ENCODE measurements at regions of chr5 and their contacts with region 1.

Region 1: GRCh38 chr5:90264689-90265544 is 144.6 kb downstream of the CETN3 start:
- DNase-seq: peak; percentile 82
- ATAC-seq: peak; percentile 84
- H3K4me3 ChIP-seq: no peak overlapping the region
- H3K27ac ChIP-seq: no peak overlapping the region
- H3K4me1 ChIP-seq: no peaks in the 10 kb centered on the region
- H3K27me3 ChIP-seq: no peaks in the 10 kb centered on the region
- CTCF ChIP-seq: peak; percentile 99

Region 2: GRCh38 chr5:89556215-89557009 is 708.5 kb before region 1 on chr5:
- CTCF ChIA-PET with region 1: no interaction called
- POLR2A ChIA-PET with region 1: no interaction called
- intact Hi-C with region 1: loop called (anchors 10 kb)
- DNase-seq: peak; percentile 96
- ATAC-seq: peak; percentile 98
- H3K4me3 ChIP-seq: peak overlapping the region; percentile 6; the same call in 1 of the 2 replicates
- H3K27ac ChIP-seq: peak overlapping the region; percentile 86
- H3K4me1 ChIP-seq: peaks cover 20% of the 10 kb centered on the region
- H3K27me3 ChIP-seq: no peaks in the 10 kb centered on the region
- CTCF ChIP-seq: no peak

Region 3: GRCh38 chr5:89721353-89721752 is 543.6 kb before region 1 on chr5:
- CTCF ChIA-PET with region 1: no interaction called
- POLR2A ChIA-PET with region 1: no interaction called
- intact Hi-C with region 1: no loop called
- DNase-seq: no peak
- ATAC-seq: no peak
- H3K4me3 ChIP-seq: no peak overlapping the region
- H3K27ac ChIP-seq: no peak overlapping the region
- H3K4me1 ChIP-seq: peaks cover 9% of the 10 kb centered on the region
- H3K27me3 ChIP-seq: no peaks in the 10 kb centered on the region
- CTCF ChIP-seq: no peak

Region 4: GRCh38 chr5:89756955-89757354 is 508.0 kb before region 1 on chr5:
- CTCF ChIA-PET with region 1: no interaction called
- POLR2A ChIA-PET with region 1: interaction called, 10 read pairs
- intact Hi-C with region 1: no loop called
- DNase-seq: no peak
- ATAC-seq: no peak
- H3K4me3 ChIP-seq: no peak overlapping the region
- H3K27ac ChIP-seq: no peak overlapping the region
- H3K4me1 ChIP-seq: peaks cover 14% of the 10 kb centered on the region
- H3K27me3 ChIP-seq: no peaks in the 10 kb centered on the region
- CTCF ChIP-seq: no peak

Region 5: GRCh38 chr5:90111364-90112032 is 153.4 kb before region 1 on chr5:
- CTCF ChIA-PET with region 1: no interaction called
- POLR2A ChIA-PET with region 1: no interaction called
- intact Hi-C with region 1: loop called (anchors 10 kb)
- DNase-seq: no peak
- ATAC-seq: no peak
- H3K4me3 ChIP-seq: no peak overlapping the region
- H3K27ac ChIP-seq: no peak overlapping the region
- H3K4me1 ChIP-seq: no peaks in the 10 kb centered on the region
- H3K27me3 ChIP-seq: no peaks in the 10 kb centered on the region
- CTCF ChIP-seq: no peak

Region 6: GRCh38 chr5:90221942-90222341 is 43.0 kb before region 1 on chr5:
- CTCF ChIA-PET with region 1: no interaction called
- POLR2A ChIA-PET with region 1: no interaction called
- intact Hi-C with region 1: loop called (anchors 1 kb)
- DNase-seq: peak; percentile 96
- ATAC-seq: peak; percentile 99
- H3K4me3 ChIP-seq: no peak overlapping the region
- H3K27ac ChIP-seq: peak overlapping the region; percentile 70
- H3K4me1 ChIP-seq: peaks cover 27% of the 10 kb centered on the region
- H3K27me3 ChIP-seq: no peaks in the 10 kb centered on the region
- CTCF ChIP-seq: no peak

Region 7: GRCh38 chr5:90233476-90233875 is 31.4 kb before region 1 on chr5:
- CTCF ChIA-PET with region 1: no interaction called
- POLR2A ChIA-PET with region 1: no interaction called
- intact Hi-C with region 1: no loop called
- DNase-seq: no peak
- ATAC-seq: no peak
- H3K4me3 ChIP-seq: no peak overlapping the region
- H3K27ac ChIP-seq: no peak overlapping the region
- H3K4me1 ChIP-seq: peaks cover 15% of the 10 kb centered on the region
- H3K27me3 ChIP-seq: no peaks in the 10 kb centered on the region
- CTCF ChIP-seq: no peak

Region 8: DNA sequence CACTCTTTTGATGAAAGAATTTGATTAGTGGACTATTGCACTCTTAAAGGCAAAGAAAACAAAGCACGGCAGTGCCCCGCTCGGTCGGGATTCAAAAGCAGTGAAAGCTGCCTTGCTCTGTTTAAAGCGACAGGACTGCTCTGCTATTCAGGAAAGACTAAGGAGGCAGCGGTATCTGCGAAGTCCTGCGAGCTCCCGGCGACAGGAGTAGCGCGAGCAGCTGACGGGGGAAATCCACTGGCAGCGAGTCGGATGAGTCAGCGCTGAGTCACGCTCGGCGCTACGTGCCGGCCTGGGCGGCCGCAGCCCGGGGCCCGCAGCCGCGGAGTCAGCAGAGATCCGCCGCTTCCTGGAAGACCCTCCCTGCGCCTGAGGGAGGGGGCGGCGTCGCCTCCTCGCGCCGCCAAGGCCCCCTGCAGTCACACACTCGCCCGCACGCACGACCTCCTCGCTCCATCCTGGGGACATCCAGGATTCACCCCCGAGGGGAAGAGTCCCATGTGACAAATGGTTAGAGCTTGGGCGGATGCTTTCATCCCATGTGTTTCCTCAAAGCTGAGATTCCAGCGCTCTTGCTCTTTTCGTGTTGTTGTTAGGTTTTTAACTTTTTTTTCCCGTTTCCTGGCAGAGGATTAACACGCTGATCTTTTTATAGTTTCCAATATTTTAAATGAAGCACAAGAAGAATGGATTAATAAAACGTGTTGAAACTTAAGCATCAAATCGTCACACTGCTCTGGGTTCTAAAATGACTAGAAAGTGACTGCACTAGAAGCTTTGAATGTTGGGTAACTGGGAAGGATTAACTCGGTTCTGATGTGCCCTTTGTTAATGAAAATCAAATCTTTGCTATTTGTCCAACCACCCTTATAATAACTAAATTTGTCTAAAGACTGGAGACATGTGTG is 1015.7 kb after region 1 on chr5:
- CTCF ChIA-PET with region 1: no interaction called
- POLR2A ChIA-PET with region 1: no interaction called
- intact Hi-C with region 1: no loop called
- DNase-seq: peak; percentile 97
- ATAC-seq: peak; percentile 84
- H3K4me3 ChIP-seq: peak overlapping the region; percentile 64
- H3K27ac ChIP-seq: peak overlapping the region; percentile 99
- H3K4me1 ChIP-seq: peaks cover 40% of the 10 kb centered on the region
- H3K27me3 ChIP-seq: no peaks in the 10 kb centered on the region
- CTCF ChIP-seq: no peak